Naive thymus-derived CD8-positive, alpha-beta T cell (primary cell): ENCODE measurements at regions of chr11 and their contacts with region 1.

Region 1: GRCh38 chr11:27472398-27473016 is at the start of gene LGR4:
- DNase-seq: peak; percentile 45 to 84 (median 70)
- ATAC-seq: peak; percentile 86 to 94
- H3K4me3 Mint-ChIP-seq: peak within 1 kb of the TSS; percentile 94 to 99 (median 97)
- H3K27ac Mint-ChIP-seq: peak within 1 kb of the TSS; percentile 52 to 92 (median 74)
- H3K4me1 Mint-ChIP-seq: peaks cover 9 to 22% (median 20%) of the 10 kb centered on the region in 4 donors
- H3K27me3 Mint-ChIP-seq: peaks cover 0 to 12% (median 4%) of the 10 kb centered on the region in 5 donors
- polyA plus RNA-seq, gene LGR4: 0.13 to 0.24 (median 0.13) TPM

Region 2: DNA sequence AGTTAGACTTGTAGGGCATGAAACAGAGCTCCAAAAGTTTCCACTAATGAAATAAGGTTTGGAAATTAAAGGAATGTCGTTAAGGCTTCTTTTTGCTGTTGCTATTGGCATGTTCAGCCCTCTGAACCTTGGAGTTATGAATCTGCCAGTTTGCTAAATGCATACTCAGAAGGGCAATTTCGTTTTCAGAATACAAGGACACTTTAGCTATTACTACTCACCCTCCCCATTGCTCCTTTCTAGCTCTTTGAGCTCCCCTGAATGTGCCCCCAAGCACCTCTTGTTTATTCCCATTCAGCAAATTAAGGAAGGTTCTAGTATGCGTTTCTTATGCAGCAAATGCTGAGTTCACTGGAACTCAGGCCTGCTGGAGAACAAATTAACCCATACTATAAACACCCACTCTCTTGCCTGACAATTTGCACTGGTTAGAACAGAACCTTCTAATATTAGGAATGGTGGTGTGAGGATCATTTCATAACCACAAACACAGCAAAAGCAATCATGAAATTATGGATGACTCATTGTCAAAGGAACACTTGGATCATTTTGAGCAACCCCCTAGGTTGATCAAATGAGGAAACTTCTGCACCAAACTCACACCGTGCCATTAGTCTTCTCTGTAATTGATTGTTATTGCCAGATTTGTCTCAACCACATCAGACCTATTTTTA is 60.3 kb after region 1 on chr11:
- POLR2A ChIA-PET with region 1: interaction called, 12 read pairs
- DNase-seq: no peak
- ATAC-seq: no peak
- H3K4me3 Mint-ChIP-seq: no peak overlapping the region
- H3K27ac Mint-ChIP-seq: no peak overlapping the region
- H3K4me1 Mint-ChIP-seq: peaks cover 0 to 2% (median 0%) of the 10 kb centered on the region in 4 donors
- H3K27me3 Mint-ChIP-seq: no peaks in the 10 kb centered on the region

Region 3: DNA sequence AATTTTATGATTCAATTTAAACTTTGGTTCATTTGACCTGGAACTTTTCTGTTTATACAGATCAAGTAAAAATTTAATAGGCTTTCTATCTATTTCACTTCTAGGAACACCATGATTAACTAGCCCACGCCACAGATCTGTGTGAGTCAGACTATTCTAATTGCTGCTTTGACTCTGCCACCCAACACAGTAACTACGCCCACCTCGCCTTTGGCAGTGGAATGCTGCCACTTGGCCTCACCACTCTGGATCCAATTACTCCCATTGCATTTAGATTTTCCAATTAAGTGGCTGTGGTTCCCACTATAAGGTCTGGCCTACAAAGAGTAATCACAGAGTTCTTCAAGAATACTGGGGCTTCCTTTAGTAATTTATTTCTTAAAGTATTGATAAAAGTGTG is 80.7 kb after region 1 on chr11:
- POLR2A ChIA-PET with region 1: no interaction called
- DNase-seq: no peak
- ATAC-seq: no peak
- H3K4me3 Mint-ChIP-seq: no peak overlapping the region
- H3K27ac Mint-ChIP-seq: no peak overlapping the region
- H3K4me1 Mint-ChIP-seq: no peaks in the 10 kb centered on the region
- H3K27me3 Mint-ChIP-seq: no peaks in the 10 kb centered on the region